ENCODE measurements at regions of chr5 and their contacts with region 1.

Region 1: DNA sequence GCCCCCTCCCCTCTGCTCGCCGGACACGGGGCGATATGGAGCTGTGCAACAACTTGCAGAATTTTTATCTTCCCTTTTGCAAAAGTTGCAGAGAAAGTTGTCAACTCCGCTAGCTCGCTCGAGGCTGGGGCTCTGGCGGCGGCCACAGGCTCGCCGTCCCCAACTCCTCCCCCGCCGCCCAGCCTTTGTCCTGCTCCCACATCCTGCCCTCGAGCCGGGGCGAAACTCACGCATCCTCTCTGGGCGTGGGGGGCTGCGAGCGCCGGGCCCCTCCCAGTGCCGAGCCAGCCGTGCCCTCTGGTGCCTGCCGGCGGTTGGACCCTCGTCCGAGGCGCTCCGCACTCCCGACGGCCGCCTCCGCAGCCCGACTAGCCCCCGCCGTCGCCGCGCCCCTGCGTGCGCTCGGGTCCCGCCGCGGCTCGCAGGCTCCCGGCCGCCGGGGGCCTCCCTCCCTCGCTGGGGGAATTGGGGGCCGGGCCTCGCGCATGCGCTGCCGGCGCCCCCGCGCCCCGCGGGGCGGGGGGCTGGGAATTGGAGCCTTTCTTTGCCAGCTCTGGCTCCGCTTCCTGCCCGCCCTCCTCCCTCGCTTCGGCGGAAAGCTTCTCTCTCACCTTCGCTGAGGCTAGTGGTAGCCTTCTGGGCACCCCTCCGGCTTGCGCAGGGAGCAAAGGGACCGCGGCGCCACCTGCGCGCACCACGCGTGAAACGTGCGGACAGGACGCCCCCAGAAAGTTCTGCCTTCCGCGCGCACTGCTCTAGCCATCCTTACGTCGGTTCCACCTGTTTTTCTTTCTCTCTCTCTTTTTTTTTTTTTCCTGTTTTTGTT is at the start of gene CCNJL:
- DNase-seq: peak; percentile 47 to 91
- H3K4me3 ChIP-seq: peak within 1 kb of the TSS; percentile 78
- H3K27ac ChIP-seq: peak within 1 kb of the TSS; percentile 60
- H3K4me1 ChIP-seq: peaks cover 46% of the 10 kb centered on the region
- H3K27me3 ChIP-seq: no peaks in the 10 kb centered on the region
- CTCF ChIP-seq: no peak
- total RNA-seq, gene CCNJL: 33.9 and 34.7 TPM in 2 replicates

Region 2: GRCh38 chr5:160245506-160246086 is 66.8 kb before region 1 on chr5:
- CTCF ChIA-PET with region 1: no interaction called
- POLR2A ChIA-PET with region 1: no interaction called
- intact Hi-C with region 1: loop called (anchors 2 kb)
- DNase-seq: no peak
- H3K4me3 ChIP-seq: no peak overlapping the region
- H3K27ac ChIP-seq: no peak overlapping the region
- H3K4me1 ChIP-seq: no peaks in the 10 kb centered on the region
- H3K27me3 ChIP-seq: no peaks in the 10 kb centered on the region
- CTCF ChIP-seq: no peak

Region 3: GRCh38 chr5:160260881-160261815 is 51.2 kb before region 1 on chr5:
- CTCF ChIA-PET with region 1: no interaction called
- POLR2A ChIA-PET with region 1: no interaction called
- intact Hi-C with region 1: loop called (anchors 2 kb)
- DNase-seq: peak; percentile 84 to 99
- H3K4me3 ChIP-seq: no peak overlapping the region
- H3K27ac ChIP-seq: peak overlapping the region; percentile 79
- H3K4me1 ChIP-seq: peaks cover 18% of the 10 kb centered on the region
- H3K27me3 ChIP-seq: no peaks in the 10 kb centered on the region
- CTCF ChIP-seq: no peak

Region 4: GRCh38 chr5:160324886-160325285 is 12.5 kb after region 1 on chr5:
- CTCF ChIA-PET with region 1: no interaction called
- POLR2A ChIA-PET with region 1: no interaction called
- intact Hi-C with region 1: loop called (anchors 2 kb)
- DNase-seq: no peak
- H3K4me3 ChIP-seq: no peak overlapping the region
- H3K27ac ChIP-seq: no peak overlapping the region
- H3K4me1 ChIP-seq: peaks cover 16% of the 10 kb centered on the region
- H3K27me3 ChIP-seq: no peaks in the 10 kb centered on the region
- CTCF ChIP-seq: no peak

Measured in PC-9 (cell line).